Kidney (tissue), 22 donors: ENCODE measurements at regions of chrX and their contacts with region 1.

Region 1: DNA sequence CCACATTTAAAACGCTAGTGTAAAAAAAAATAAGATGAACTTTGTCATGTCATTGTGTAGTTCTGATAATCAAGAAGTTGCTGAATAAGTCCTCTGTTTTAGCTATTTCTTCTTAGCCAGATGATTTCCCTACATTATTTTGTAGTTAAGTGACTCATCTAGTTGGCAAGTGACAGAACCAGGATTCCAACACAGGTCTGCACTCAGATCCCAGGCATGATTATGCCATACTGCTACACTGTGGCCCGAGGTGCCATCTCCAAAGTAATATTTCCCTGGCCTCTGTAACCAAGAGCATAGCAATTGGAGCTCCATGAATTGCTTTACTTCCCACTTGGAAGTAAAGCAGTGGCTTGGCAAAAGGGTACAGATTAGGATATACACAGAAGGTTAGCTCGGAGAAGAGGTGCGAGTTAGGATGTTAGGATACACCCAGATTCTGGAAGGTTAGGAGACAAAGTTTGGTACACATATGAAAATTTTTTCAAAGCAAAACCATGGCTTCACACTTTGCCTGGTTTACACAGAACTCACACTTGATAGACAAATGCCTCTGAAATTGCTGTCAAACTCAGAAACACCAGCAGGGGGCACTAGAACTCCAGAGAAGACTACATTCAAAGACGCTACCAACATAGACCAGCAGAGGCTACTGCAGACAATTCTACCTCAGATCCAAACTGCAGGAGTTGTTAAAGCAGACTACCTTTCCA is 41.4 kb downstream of the SRPX2 start:
- DNase-seq: peak in 4 of 5 donors; percentile 75 to 84 (median 79)
- H3K4me3 ChIP-seq: no peak overlapping the region
- H3K27ac ChIP-seq: no peak overlapping the region
- H3K4me1 ChIP-seq: no peaks in the 10 kb centered on the region
- H3K27me3 ChIP-seq: peaks cover 4% of the 10 kb centered on the region
- CTCF ChIP-seq: peak; percentile 79

Region 2: DNA sequence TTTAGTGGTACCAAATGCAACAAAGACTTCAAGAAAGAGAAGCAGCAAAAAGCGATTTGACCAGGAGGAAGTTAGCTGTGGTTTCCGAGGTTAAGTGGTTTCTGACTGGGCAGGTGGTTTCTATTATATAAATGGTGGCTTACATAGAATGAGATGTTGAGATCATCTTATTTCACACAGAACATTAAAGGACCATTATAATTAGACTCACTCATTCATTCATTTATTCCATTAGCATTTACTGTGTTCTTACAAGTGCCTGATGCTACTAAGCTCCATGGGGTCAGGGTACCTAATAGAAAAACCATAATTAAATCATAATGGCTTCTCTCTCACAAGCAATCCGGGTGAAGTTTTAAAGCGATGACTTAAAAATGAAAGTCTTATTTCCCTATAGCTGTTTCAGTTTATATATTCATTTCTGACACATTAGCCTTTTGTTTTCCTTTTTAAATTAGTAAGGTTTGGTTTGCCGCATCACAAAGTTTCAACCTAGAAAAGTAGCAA is 59.4 kb before region 1 on chrX:
- intact Hi-C with region 1: no loop called
- DNase-seq: no peak
- H3K4me3 ChIP-seq: no peak overlapping the region
- H3K27ac ChIP-seq: no peak overlapping the region
- H3K4me1 ChIP-seq: no peaks in the 10 kb centered on the region
- H3K27me3 ChIP-seq: no peaks in the 10 kb centered on the region
- CTCF ChIP-seq: no peak

Region 3: GRCh38 chrX:100768679-100769338 is 83.4 kb after region 1 on chrX:
- intact Hi-C with region 1: loop called (anchors 5 kb)
- DNase-seq: peak; percentile 68 to 83 (median 78)
- H3K4me3 ChIP-seq: no peak overlapping the region
- H3K27ac ChIP-seq: no peak overlapping the region
- H3K4me1 ChIP-seq: no peaks in the 10 kb centered on the region
- H3K27me3 ChIP-seq: no peaks in the 10 kb centered on the region
- CTCF ChIP-seq: peak; percentile 99